Heart right ventricle (tissue), 16 donors: ENCODE measurements at regions of chr9 and their contacts with region 1.

Region 1: DNA sequence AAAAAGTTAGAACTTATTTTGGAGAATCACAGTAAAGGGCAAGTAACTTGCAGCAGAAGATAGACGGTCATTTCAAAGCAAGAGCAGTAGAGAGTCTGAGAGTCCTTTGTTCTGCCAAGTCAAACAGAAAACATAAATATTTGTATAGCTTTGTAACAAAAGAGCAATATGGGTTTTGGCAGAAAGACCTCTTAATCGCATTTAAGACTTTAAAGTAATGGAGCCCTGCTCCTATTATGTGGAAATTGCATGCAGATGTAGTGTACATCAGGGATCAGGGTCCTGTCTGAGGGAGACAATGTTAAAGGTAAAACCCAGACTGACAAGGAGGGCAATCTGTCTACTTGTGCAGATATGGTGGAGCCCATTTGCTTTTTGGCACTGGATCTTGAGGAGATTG is 87.2 kb downstream of the PGM5 start:
- DNase-seq: no peak
- ATAC-seq: no peak
- H3K4me3 ChIP-seq: no peak overlapping the region
- H3K27ac ChIP-seq: no peak overlapping the region
- H3K4me1 ChIP-seq: peaks cover 5 to 34% (median 17%) of the 10 kb centered on the region in 9 donors
- H3K27me3 ChIP-seq: no peaks in the 10 kb centered on the region
- CTCF ChIP-seq: no peak

Region 2: GRCh38 chr9:68455451-68455850 is 11.8 kb after region 1 on chr9:
- intact Hi-C with region 1: loop called in 1 of 10 experiments (anchors 2 kb)
- DNase-seq: no peak
- ATAC-seq: no peak
- H3K4me3 ChIP-seq: no peak overlapping the region
- H3K27ac ChIP-seq: peak overlapping the region in 4 of 10 donors; percentile 2 to 41 (median 16)
- H3K4me1 ChIP-seq: peaks cover 0 to 76% (median 24%) of the 10 kb centered on the region in 9 donors
- H3K27me3 ChIP-seq: no peaks in the 10 kb centered on the region
- CTCF ChIP-seq: no peak

Region 3: GRCh38 chr9:68560071-68560844 is 116.6 kb after region 1 on chr9:
- intact Hi-C with region 1: no loop called
- DNase-seq: peak; percentile 39 to 42
- ATAC-seq: peak; percentile 35 to 77 (median 68)
- H3K4me3 ChIP-seq: no peak overlapping the region
- H3K27ac ChIP-seq: peak overlapping the region in 4 of 10 donors; percentile 25 to 69 (median 46)
- H3K4me1 ChIP-seq: peaks cover 0 to 36% (median 11%) of the 10 kb centered on the region in 9 donors
- H3K27me3 ChIP-seq: no peaks in the 10 kb centered on the region
- CTCF ChIP-seq: peak in 7 of 9 donors; percentile 42 to 63 (median 49)